ENCODE measurements at regions of chr19 and their contacts with region 1.

Region 1: DNA sequence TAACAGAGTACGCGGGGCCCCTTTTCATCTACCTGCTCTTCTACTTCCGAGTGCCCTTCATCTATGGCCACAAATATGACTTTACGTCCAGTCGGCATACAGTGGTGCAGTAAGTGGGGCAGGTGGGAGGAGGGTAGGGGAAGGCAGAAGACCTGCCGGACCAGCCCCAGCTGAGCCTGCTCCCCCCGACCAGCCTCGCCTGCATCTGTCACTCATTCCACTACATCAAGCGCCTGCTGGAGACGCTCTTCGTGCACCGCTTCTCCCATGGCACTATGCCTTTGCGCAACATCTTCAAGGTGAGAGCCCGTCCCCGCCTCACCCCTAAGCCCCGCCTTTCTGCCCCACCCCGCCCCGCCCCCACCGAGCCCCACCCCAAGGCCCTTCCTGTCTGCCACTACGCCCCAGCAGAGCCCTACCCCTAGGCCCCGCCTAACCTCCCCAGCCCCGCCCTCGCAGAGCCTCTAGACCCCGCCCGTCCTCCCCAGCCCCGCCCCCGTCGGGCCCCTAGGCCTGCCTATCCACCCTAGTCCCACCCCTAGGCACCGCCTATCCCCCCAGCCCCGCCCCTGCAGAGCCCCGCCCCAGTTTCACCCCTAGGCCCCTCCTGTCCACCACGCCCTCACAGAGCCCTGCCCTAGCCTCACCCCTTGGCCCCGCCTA is 7.7 kb downstream of the NDUFB7 start:
- DNase-seq: peak; percentile 80 to 91
- ATAC-seq: peak; percentile 16 to 39
- H3K4me3 ChIP-seq: peak overlapping the region in 3 of 4 donors; percentile 6 to 48 (median 33)
- H3K27ac ChIP-seq: peak overlapping the region; percentile 98 to 100 (median 99)
- H3K4me1 ChIP-seq: peaks cover 48 to 50% of the 10 kb centered on the region in 2 donors
- H3K27me3 ChIP-seq: no peaks in the 10 kb centered on the region
- CTCF ChIP-seq: no peak
- POLR2A ChIP-seq: peak; percentile 14 to 17

Region 2: DNA sequence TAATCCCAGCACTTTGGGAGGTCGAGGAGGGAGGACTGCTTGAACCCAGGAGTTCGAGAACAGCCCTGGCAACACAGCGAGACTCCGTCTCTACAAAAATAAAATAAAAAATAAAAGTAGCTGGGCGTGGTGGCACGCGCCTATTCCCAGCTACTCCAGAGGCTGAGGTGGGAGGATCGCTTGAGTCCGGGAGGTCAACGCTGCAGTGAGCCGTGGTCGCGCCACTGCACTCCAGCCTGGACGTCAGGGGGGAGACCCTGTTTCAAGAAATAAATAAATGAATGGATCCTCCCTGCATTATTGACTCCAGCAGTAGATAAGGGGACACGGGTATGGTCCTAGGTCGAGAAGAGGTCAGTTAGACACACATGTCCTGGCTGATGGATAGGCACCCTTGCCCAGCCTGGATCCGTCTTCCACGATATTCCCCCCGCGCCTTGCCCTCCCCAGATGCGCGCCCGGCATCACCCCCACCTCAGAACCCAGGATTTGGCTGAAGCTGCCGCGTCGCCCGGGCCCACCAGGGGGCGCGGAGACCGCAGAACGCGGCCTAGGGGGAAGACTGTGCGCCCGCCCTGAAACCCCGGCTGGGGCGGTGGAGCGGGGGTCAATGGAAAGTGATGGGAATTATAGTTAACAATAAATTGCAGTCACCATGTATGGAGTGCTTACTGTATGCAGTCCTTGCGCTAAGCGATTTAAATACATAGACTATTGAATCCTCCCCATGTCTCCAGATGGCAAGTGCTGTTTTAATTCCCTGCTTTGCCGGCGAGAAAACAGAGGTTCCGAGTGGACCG is 1786.7 kb before region 1 on chr19:
- in situ Hi-C with region 1: no loop called
- intact Hi-C with region 1: loop called (anchors 10 kb)
- DNase-seq: peak in 1 of 2 donors; percentile 66
- ATAC-seq: peak; percentile 28 to 38
- H3K4me3 ChIP-seq: peak overlapping the region; percentile 58 to 76 (median 70)
- H3K27ac ChIP-seq: peak overlapping the region; percentile 87 to 94 (median 92)
- H3K4me1 ChIP-seq: peaks cover 44 to 57% of the 10 kb centered on the region in 2 donors
- H3K27me3 ChIP-seq: no peaks in the 10 kb centered on the region
- CTCF ChIP-seq: peak; percentile 93 to 98 (median 96)
- POLR2A ChIP-seq: no peak

Region 3: DNA sequence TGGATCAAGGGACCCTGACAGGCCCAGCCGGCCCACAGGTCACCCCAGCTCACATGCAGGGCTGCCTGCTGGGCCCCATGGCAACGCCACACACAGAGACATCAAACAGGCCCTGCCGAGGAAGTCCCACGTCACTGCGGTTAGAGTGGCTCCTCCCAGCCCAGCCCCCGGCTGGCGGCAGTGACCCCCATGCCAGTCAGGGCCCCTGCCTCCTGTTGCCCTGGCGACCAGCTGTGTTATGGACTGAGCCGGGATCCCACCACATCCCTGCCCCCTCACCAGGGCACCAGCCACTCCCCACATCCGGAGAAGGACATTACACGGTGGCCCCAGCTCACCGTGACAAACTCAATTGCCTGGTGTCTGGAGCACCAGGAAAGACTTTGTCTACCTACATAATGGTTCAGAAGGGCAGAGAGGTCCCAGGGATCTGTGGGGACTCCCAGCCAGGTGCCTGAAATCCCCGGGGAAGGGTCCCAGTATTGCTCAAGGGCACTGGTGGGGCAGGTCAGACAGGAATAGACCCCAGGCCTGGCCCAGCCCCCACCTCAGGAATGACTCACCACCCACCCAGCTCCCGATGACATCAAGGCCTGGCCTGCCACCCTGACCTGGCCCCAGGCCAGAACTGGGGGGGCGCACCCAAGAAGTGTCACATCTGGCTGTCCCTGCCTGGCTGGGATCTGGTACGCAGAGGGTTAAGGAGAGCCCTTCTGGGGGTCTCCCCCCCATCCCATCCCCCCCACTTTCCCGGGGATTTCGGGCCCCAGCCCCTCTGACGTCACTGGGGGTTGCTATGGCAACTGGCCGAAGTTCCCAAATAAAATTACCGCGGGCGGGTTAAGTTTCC is 717.3 kb before region 1 on chr19:
- in situ Hi-C with region 1: no loop called
- intact Hi-C with region 1: loop called (anchors 10 kb)
- DNase-seq: peak; percentile 69 to 87
- ATAC-seq: peak; percentile 38 to 54
- H3K4me3 ChIP-seq: peak overlapping the region; percentile 68 to 78 (median 70)
- H3K27ac ChIP-seq: peak overlapping the region; percentile 96 to 100 (median 98)
- H3K4me1 ChIP-seq: peaks cover 49 to 54% of the 10 kb centered on the region in 2 donors
- H3K27me3 ChIP-seq: no peaks in the 10 kb centered on the region
- CTCF ChIP-seq: no peak
- POLR2A ChIP-seq: peak; percentile 7 to 22

Region 4: GRCh38 chr19:14117668-14118164 is 446.4 kb before region 1 on chr19 and contains the start of gene PRKACA:
- in situ Hi-C with region 1: no loop called
- intact Hi-C with region 1: loop called (anchors 2 kb)
- DNase-seq: peak; percentile 99
- ATAC-seq: peak; percentile 59 to 73
- H3K4me3 ChIP-seq: peak within 1 kb of the TSS; percentile 83 to 99 (median 95)
- H3K27ac ChIP-seq: peak within 1 kb of the TSS; percentile 99 to 100 (median 99)
- H3K4me1 ChIP-seq: peaks cover 60% of the 10 kb centered on the region in 2 donors
- H3K27me3 ChIP-seq: no peaks in the 10 kb centered on the region
- CTCF ChIP-seq: no peak
- POLR2A ChIP-seq: peak; percentile 76 to 87
- total RNA-seq, gene PRKACA: 74.7 to 180 (median 147) TPM

Region 5: DNA sequence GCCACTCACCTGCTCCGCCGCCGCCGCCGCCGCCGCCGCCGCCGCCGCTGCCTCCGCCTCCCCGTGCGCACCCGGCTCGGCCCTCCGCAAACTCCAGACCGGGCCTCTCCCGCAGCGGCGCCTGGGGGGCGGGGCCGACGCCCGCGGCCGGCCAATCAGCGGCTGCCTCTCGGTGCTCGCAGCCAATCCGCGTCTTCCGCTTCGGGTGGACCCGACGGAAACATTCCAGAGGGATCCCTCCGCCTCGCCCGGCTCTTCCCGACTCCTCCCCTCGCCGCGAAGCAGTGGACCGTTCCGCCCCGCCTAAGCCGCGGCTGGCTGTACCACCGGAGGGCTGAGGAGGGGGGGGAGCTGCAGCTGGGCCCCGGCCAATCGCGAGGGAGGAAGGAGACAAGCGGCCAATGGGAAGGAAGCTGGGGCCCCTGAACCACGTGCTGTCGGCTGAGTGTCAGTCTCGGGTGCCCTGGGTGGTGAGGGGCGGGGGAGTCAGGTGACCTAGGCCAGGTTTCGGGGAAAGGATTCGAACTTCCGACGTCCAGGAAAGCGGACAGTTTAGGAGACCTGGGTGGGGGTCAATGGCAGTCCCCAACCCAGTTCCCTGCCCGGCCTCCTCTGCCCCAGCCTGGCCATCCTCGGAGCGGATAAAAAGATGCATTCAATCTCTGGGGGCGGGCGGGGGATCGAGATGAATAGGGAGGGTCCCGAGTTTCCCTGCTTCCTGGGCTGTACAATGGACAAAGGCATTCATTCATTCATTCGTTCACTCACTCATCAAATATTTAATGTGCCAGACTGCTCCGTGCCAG is 67.9 kb before region 1 on chr19 and contains the start of gene GIPC1:
- in situ Hi-C with region 1: no loop called
- intact Hi-C with region 1: loop called (anchors 5 kb)
- DNase-seq: peak; percentile 92 to 95
- ATAC-seq: peak; percentile 93 to 94
- H3K4me3 ChIP-seq: peak within 1 kb of the TSS; percentile 74 to 84 (median 80)
- H3K27ac ChIP-seq: peak within 1 kb of the TSS; percentile 72 to 82 (median 74)
- H3K4me1 ChIP-seq: peaks cover 6 to 18% of the 10 kb centered on the region in 2 donors
- H3K27me3 ChIP-seq: no peaks in the 10 kb centered on the region
- CTCF ChIP-seq: peak in 2 of 5 experiments; percentile 5 to 22
- POLR2A ChIP-seq: peak; percentile 46 to 49
- total RNA-seq, gene GIPC1: 18.4 to 70.3 (median 54.7) TPM

Region 6: DNA sequence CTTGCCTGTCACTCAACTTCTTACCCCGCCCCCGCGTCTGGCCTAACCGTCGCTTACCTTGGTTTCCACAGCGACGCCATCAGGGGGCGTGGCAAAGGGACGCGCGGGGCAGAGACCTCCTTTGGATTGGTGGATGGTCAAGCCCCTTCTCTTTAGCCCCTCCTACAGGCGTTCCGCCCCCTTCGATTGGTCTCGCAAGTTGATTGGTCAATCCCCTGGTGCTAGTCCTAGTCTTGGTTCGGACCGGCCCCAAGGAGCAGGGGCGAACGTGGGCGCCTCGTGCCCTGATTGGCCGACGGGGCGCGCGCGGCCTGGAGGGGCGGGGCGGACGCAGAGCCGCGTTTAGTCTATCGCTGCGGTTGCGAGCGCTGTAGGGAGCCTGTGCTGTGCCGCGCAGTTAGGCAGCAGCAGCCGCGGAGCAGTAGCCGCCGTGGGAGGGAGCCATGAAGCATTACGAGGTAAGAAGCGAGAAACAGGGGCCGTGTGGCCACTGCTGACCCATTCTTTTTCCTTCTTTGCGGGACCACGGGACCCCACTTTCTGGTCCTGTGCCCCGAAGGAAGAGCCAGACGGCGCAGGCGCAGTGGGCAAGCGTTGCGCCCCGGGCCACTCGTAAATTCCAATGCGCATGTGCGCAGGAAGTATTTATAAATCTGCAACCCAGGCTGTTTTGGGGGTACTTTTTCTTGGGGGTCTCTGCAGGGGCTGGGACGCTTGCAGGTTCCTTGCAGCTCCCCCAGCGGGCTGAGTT is 34.7 kb before region 1 on chr19 and contains the start of gene TECR:
- in situ Hi-C with region 1: no loop called
- intact Hi-C with region 1: loop called (anchors 2 kb)
- DNase-seq: peak; percentile 100
- ATAC-seq: peak; percentile 96
- H3K4me3 ChIP-seq: peak within 1 kb of the TSS; percentile 80 to 98 (median 84)
- H3K27ac ChIP-seq: peak within 1 kb of the TSS; percentile 95 to 98 (median 98)
- H3K4me1 ChIP-seq: peaks cover 24 to 37% of the 10 kb centered on the region in 2 donors
- H3K27me3 ChIP-seq: no peaks in the 10 kb centered on the region
- CTCF ChIP-seq: no peak
- POLR2A ChIP-seq: peak; percentile 96 to 97
- total RNA-seq, gene TECR: 56.2 to 155 (median 113) TPM

Region 7: DNA sequence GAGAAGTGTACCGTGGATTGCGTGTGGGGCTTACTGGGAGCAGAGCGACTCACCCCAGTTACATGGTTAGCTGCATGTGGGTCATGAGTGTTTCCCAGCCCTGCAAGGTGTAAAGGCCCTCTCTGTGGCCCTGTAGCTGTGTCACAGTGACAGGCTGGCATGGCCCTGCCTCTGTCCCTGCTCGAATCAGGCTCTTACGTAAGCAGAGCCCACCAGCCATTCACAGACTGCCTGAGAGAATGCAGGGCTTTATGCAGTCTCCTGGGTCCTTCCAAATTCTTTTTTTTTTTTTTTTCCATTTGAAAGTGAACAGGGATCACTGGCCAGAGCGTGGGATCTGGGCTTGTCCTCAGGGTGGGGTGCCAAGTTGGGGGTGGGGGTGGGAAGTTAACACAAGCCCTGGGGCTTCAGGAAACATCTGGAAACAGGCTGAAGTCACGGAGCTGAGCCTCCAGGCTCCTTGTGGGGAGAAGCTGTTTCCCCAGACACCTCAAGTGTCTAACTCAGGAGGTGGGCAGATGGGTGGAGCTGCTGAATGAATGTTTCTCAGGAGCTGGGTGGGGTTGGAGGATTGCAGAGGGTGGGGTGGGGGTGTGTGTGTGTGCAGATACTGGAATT is 21.3 kb before region 1 on chr19:
- in situ Hi-C with region 1: no loop called
- intact Hi-C with region 1: no loop called
- DNase-seq: no peak
- ATAC-seq: no peak
- H3K4me3 ChIP-seq: no peak overlapping the region
- H3K27ac ChIP-seq: peak overlapping the region; percentile 62 to 90 (median 74)
- H3K4me1 ChIP-seq: peaks cover 21 to 47% of the 10 kb centered on the region in 2 donors
- H3K27me3 ChIP-seq: no peaks in the 10 kb centered on the region
- CTCF ChIP-seq: no peak
- POLR2A ChIP-seq: no peak

Region 8: DNA sequence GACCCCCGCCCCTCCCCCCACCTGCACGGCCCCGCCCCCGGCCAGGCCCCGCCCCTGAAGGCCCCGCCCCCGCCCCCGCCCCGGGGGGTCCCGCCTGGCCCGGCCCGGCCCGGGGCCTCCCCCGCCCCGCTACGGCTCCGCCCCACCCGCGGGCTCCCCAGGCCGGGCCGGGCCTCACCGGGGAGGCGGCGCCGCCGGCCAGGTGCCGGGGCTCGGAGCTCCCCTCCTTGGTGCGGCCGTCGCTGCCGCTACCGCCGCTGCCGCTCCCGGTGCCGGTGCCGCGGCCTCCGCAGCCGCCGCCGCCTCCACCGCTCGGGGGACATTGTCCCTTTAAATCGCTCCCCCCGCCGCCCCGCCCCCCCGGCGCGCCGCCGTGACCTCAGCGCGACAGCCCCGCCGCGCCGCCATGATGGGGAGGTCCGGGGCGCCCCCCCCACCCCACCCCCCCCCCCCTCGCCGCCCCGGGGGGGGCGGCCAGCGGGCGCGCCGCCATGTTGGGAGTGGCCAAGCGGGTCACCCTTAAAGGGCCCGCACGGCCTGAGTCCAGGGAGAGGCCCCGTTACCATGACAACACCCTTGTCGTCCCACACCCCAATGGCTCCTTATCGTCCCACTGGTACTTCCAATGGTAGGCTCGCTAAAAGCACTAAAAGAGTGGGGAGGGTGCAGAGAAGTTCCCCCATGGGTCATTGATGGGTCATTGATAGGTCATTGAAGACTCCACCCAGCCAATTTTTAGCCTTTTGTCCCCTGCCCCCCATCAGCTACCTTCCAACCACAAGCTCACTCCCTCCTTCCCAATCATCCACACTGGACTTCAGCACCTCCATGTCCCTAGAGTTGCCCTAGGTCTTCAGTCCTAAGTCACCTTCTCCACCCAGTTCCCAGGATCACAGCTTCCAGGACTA is 885.8 kb after region 1 on chr19 and contains the start of gene WIZ:
- in situ Hi-C with region 1: no loop called
- intact Hi-C with region 1: loop called (anchors 10 kb)
- DNase-seq: peak; percentile 59 to 84
- ATAC-seq: peak; percentile 32 to 34
- H3K4me3 ChIP-seq: peak within 1 kb of the TSS; percentile 69 to 84 (median 79)
- H3K27ac ChIP-seq: peak within 1 kb of the TSS; percentile 87 to 99 (median 98)
- H3K4me1 ChIP-seq: peaks cover 30% of the 10 kb centered on the region in 2 donors
- H3K27me3 ChIP-seq: peaks cover 0 to under 1% (median 0%) of the 10 kb centered on the region in 3 donors
- CTCF ChIP-seq: no peak
- POLR2A ChIP-seq: peak; percentile 64 to 67
- total RNA-seq, gene WIZ: 28.0 to 40.6 (median 32.5) TPM

Measured in gastrocnemius medialis (tissue), 4 donors.